K562 (cell line): ENCODE measurements at regions of chr7 and their contacts with region 1.

Region 1: DNA sequence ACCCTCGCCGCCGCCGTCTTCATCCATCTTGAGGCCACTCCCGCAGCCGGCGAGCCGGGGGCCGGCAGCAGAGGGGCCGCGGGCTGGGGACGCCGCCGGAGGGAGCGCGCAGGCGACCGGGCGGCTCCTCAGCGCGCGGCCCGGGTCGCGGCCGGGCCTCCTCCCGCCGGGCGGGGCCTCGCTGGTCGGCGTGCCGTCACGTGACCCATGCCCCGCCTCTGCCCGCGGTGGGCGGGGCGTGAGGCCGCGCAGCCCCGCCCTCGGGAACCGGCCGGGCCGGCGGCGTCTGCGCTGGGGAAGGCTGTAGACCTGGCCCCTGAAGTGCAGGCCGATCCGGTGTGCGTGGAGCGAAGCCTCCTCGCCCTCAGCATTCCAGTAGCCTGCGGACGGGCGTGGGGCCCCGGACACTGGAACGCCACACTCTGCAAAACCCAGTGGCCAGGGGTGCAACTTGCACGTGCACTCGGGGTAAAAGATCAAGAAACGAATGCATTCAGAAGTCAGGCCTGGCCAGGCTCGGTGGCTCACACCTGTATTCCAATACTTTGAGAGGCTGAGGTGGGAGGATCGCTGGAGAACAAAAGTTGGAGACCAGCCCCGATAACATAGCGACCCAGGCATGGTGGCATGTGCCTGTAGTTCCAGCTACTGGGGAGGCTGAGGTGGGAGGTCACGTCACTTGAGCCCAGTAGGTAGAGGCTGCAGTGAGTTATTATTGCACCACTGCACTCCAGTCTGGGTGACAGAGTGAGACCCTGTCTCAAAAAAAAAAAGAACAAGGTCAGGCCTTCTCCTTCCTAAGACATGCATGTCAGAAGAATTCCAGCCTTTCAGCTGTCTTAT is at the start of gene CYTH3:
- DNase-seq: peak; percentile 87 to 99 (median 98)
- ATAC-seq: peak; percentile 91
- H3K4me3 ChIP-seq: peak within 1 kb of the TSS; percentile 78
- H3K27ac ChIP-seq: peak within 1 kb of the TSS; percentile 67
- H3K4me1 ChIP-seq: peaks cover 32 to 45% of the 10 kb centered on the region in 2 experiments; a peak in 4 of 5 replicates
- H3K27me3 ChIP-seq: no peaks in the 10 kb centered on the region
- CTCF ChIP-seq: no peak
- EP300 ChIP-seq: no peak
- POLR2A ChIP-seq: peak; percentile 55; the same call in 1 of the 2 replicates
- RAD21 ChIP-seq: no peak
- polyA plus RNA-seq, gene CYTH3: 0.25 to 0.42 TPM

Region 2: GRCh38 chr7:6228361-6229229 is 44.1 kb before region 1 on chr7:
- CTCF ChIA-PET with region 1: no interaction called
- POLR2A ChIA-PET with region 1: no interaction called
- in situ Hi-C with region 1: no loop called
- intact Hi-C with region 1: loop called (anchors 5 kb)
- DNase-seq: peak; percentile 59 to 70 (median 67)
- ATAC-seq: peak; percentile 81
- H3K4me3 ChIP-seq: peak overlapping the region; percentile 2; the same call in 1 of the 2 replicates
- H3K27ac ChIP-seq: peak overlapping the region; percentile 51; the same call in 1 of the 3 replicates
- H3K4me1 ChIP-seq: peaks cover 25 to 39% of the 10 kb centered on the region in 2 experiments
- H3K27me3 ChIP-seq: no peaks in the 10 kb centered on the region
- CTCF ChIP-seq: no peak
- EP300 ChIP-seq: no peak
- POLR2A ChIP-seq: no peak
- RAD21 ChIP-seq: no peak

Region 3: GRCh38 chr7:6256677-6257535 is 15.8 kb before region 1 on chr7:
- CTCF ChIA-PET with region 1: no interaction called
- POLR2A ChIA-PET with region 1: interaction called, 18 read pairs
- in situ Hi-C with region 1: no loop called
- intact Hi-C with region 1: no loop called
- DNase-seq: no peak
- ATAC-seq: peak; percentile 56
- H3K4me3 ChIP-seq: no peak overlapping the region
- H3K27ac ChIP-seq: no peak overlapping the region
- H3K4me1 ChIP-seq: peaks cover 0 to 24% of the 10 kb centered on the region in 2 experiments; a peak in 4 of 5 replicates
- H3K27me3 ChIP-seq: no peaks in the 10 kb centered on the region
- CTCF ChIP-seq: no peak
- EP300 ChIP-seq: no peak
- POLR2A ChIP-seq: no peak
- RAD21 ChIP-seq: no peak

Region 4: GRCh38 chr7:6367701-6368211 is 95.1 kb after region 1 on chr7:
- CTCF ChIA-PET with region 1: no interaction called
- POLR2A ChIA-PET with region 1: no interaction called
- in situ Hi-C with region 1: no loop called
- intact Hi-C with region 1: no loop called
- DNase-seq: peak in 1 of 4 experiments; percentile 32
- ATAC-seq: peak; percentile 80
- H3K4me3 ChIP-seq: no peak overlapping the region
- H3K27ac ChIP-seq: peak overlapping the region; percentile 76
- H3K4me1 ChIP-seq: peaks cover 9 to 12% of the 10 kb centered on the region in 2 experiments
- H3K27me3 ChIP-seq: no peaks in the 10 kb centered on the region
- CTCF ChIP-seq: no peak
- EP300 ChIP-seq: peak; percentile 30; the same call in 1 of the 2 replicates
- POLR2A ChIP-seq: no peak
- RAD21 ChIP-seq: no peak

Region 5: DNA sequence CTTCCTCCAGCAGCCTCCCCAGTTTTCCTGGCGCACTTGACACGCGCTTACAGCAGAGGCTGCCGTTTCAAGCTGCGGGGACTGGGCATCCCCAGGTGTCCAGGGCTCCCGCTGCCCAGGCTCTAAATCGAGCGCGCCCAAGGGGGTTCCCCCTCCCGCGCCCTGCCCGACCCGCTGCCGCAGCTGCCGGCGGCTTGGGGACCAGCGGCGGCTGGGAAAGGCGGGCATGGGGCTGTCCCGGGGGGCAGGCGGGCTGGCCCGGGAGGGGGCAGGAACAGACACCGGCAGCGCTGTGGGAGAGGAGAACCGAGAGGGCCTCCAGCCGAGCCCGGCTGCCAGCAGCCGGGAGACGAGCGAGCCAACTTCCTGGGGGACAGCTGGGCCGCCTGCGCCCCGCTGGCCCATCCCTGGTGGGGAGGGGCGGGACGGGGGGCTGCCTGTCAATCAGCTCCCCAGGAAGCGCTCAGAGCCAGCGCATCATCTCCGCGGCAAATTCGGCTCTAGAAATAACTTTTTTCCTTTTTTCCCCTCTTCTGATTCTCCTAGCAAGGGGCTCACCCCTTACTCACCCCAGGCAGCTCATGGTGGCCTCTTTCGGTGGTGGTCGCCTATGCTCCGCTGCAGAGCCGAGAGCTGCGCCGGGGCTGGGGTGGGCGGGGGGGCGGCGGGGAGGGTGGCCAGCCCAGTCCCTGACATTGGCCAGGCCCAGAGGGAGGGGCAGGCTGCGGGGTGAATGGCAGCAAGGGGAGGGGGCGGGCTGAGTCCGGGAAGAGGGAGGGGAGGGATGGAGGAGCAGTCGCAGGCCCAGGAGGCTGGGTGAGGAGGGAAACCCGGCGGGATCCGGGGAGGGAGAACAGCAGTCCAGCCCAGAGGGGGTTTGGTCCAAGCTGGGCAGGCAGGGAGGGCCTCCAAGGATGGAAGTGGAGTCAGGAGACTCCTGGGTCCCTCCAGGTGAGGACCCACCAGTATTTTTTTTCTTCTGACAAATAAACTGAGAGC is 263.9 kb after region 1 on chr7:
- CTCF ChIA-PET with region 1: no interaction called
- POLR2A ChIA-PET with region 1: no interaction called
- in situ Hi-C with region 1: no loop called
- intact Hi-C with region 1: no loop called
- DNase-seq: peak in 1 of 4 experiments; percentile 41
- ATAC-seq: no peak
- H3K4me3 ChIP-seq: no peak overlapping the region
- H3K27ac ChIP-seq: no peak overlapping the region
- H3K4me1 ChIP-seq: peaks cover 0 to 8% of the 10 kb centered on the region in 2 experiments; a peak in 1 of 5 replicates
- H3K27me3 ChIP-seq: peaks cover 25 to 54% of the 10 kb centered on the region in 2 experiments
- CTCF ChIP-seq: no peak
- EP300 ChIP-seq: no peak
- POLR2A ChIP-seq: no peak
- RAD21 ChIP-seq: no peak